T-cell (primary cell): ENCODE measurements at regions of chr2 and their contacts with region 1.

Region 1: DNA sequence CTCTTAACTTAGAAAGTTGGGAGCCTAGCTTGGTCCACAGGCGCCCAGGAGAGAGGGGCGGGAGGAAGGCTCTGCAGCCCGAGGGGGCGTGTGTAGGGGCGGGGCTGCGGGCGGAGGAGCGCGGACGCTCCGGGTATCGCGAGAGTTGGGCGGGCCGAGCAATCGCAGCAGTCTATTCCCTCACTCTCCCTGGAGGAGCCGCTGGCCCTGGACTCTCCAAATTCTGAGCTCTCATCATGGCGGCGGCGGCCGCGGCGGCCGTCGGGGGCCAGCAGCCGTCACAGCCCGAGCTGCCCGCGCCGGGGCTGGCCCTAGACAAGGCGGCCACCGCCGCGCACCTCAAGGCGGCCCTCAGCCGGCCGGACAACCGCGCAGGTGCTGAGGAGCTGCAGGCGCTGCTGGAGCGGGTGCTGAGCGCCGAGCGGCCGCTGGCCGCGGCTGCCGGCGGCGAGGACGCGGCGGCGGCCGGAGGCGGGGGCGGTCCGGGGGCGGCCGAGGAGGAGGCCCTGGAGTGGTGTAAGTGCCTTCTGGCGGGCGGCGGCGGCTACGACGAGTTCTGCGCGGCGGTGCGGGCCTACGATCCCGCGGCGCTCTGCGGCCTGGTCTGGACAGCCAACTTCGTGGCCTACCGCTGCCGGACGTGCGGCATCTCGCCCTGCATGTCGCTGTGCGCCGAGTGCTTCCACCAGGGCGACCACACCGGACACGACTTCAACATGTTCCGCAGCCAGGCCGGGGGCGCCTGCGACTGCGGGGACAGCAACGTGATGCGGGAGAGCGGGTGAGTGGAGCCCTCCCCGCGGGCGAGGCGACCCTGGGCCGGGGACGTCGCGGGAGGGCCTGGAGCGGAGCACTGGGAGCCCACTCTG is at the start of gene UBR3:
- DNase-seq: peak; percentile 74 to 95 (median 84)
- ATAC-seq: peak; percentile 82 to 85 (median 84)
- H3K4me3 ChIP-seq: peak within 1 kb of the TSS; percentile 52 to 83
- H3K4me3 Mint-ChIP-seq: peak within 1 kb of the TSS; percentile 94 to 98 (median 95)
- H3K27ac ChIP-seq: no peak within 1 kb of the TSS
- H3K27ac Mint-ChIP-seq: peak within 1 kb of the TSS; percentile 86 to 90
- H3K4me1 ChIP-seq: peaks cover 23 to 38% of the 10 kb centered on the region in 2 experiments
- H3K4me1 Mint-ChIP-seq: peaks cover 63 to 70% (median 69%) of the 10 kb centered on the region in 3 donors
- H3K27me3 ChIP-seq: no peaks in the 10 kb centered on the region
- H3K27me3 Mint-ChIP-seq: no peaks in the 10 kb centered on the region
- total RNA-seq, gene UBR3: 28.6 to 49.9 (median 31.3) TPM

Region 2: DNA sequence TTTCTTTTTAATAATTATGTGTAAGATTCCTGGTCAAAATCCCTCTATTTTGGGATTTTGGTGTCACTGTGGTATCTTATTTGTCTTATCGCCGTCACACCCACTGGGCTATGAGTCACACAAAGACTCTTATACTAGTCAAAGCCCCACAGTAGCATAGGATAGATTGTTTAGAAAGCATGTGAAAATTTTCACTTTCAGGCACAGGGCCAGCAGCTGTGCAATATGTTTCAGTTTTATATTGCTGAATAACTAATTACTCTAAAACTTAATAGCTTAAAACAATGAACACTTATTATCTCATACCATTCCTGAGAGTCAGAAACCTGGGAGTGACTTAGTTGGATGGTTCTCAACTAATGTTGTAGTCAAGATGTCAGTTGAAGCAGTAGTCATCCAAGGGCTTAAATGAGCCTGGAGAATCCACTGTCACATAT is 157.3 kb before region 1 on chr2:
- CTCF ChIA-PET with region 1: no interaction called
- POLR2A ChIA-PET with region 1: no interaction called
- DNase-seq: no peak
- ATAC-seq: no peak
- H3K4me3 ChIP-seq: no peak overlapping the region
- H3K4me3 Mint-ChIP-seq: no peak overlapping the region
- H3K27ac ChIP-seq: no peak overlapping the region
- H3K27ac Mint-ChIP-seq: no peak overlapping the region
- H3K4me1 ChIP-seq: no peaks in the 10 kb centered on the region
- H3K4me1 Mint-ChIP-seq: no peaks in the 10 kb centered on the region
- H3K27me3 ChIP-seq: peaks cover 0 to 8% of the 10 kb centered on the region in 2 experiments
- H3K27me3 Mint-ChIP-seq: peaks cover 0 to 4% of the 10 kb centered on the region in 2 donors

Region 3: DNA sequence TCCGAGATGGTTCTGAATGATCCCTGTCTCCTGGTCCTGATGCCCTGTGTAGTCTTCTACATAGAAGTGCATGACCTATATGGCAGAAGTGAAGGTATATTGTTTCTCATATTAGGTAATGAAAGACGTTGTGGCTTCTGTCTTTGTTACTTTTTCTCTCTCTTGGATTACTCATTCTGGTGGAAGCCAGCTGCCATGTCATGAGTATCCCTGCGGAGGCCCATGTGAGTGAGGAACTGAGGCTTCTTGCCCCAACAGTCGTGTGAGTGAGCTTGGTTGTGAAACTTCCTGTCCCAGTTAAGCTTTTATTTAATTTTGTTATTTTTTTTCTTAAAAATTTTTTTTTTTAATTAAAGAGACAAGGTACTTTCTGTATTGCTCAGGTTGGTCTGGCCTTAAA is 134.4 kb after region 1 on chr2:
- CTCF ChIA-PET with region 1: no interaction called
- POLR2A ChIA-PET with region 1: interaction called in 1 of 2 experiments, 11 read pairs
- DNase-seq: peak in 1 of 35 experiments; percentile 2
- ATAC-seq: no peak
- H3K4me3 ChIP-seq: no peak overlapping the region
- H3K4me3 Mint-ChIP-seq: no peak overlapping the region
- H3K27ac ChIP-seq: no peak overlapping the region
- H3K27ac Mint-ChIP-seq: no peak overlapping the region
- H3K4me1 ChIP-seq: no peaks in the 10 kb centered on the region
- H3K4me1 Mint-ChIP-seq: no peaks in the 10 kb centered on the region
- H3K27me3 ChIP-seq: no peaks in the 10 kb centered on the region
- H3K27me3 Mint-ChIP-seq: no peaks in the 10 kb centered on the region